ENCODE measurements at regions of chr22 and their contacts with region 1.

Region 1: GRCh38 chr22:22960307-22960706 is 72.7 kb downstream of the IGLL5 start:
- DNase-seq: no peak
- H3K4me3 ChIP-seq: no peak overlapping the region
- H3K27ac ChIP-seq: no peak overlapping the region
- H3K4me1 ChIP-seq: no peaks in the 10 kb centered on the region
- H3K27me3 ChIP-seq: no peaks in the 10 kb centered on the region
- CTCF ChIP-seq: no peak
- POLR2A ChIP-seq: no peak

Region 2: DNA sequence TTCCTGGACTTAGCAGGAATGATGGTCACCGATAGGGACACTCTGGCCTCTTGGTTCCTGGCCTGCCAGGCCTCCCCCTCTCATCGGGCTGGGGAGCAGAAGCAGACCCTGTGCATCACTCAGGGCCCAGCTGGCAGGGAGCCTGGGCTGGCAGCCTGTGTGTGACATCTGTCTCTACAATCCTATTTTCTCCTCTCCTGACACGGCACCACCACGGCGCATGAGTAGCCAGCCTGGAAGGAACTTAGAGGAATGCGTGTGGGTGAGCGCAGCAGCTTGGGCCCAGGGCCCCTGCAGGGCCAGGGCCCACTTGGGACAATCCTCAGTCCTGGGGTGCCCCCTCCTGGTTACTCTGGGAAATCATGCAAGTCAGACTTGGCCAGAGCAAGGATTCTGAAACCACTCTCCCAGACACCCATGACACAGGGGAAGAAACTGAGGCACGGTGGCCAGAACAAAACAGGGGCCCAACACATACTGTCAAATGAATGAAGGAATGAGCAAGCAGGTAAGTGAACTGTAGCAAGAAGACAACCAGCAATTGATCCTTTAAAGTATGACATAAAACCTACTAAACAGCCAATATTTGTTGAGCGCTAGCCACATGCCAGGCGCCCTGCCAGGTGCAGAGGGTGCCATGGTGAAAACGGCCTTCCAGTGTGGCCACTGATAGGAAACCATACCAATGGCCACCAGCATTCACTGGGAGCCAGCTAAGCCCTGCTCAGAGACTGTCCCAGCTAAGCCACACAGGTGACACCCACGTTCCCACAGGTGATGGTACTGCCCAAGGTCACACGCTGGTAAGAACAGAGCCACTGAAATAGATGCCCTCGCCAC is 168.2 kb after region 1 on chr22:
- intact Hi-C with region 1: loop called (anchors 2 kb)
- DNase-seq: no peak
- H3K4me3 ChIP-seq: no peak overlapping the region
- H3K27ac ChIP-seq: no peak overlapping the region
- H3K4me1 ChIP-seq: no peaks in the 10 kb centered on the region
- H3K27me3 ChIP-seq: no peaks in the 10 kb centered on the region
- CTCF ChIP-seq: peak; percentile 52 to 71 (median 60)
- POLR2A ChIP-seq: no peak

Measured in vagina (tissue), 2 donors.